IMR-90 (cell line): ENCODE measurements at regions of chr20 and their contacts with region 1.

Region 1: GRCh38 chr20:1212607-1213396 is 9.5 kb downstream of the C20orf202 start:
- DNase-seq: peak; percentile 72
- ATAC-seq: peak; percentile 99
- H3K4me3 ChIP-seq: no peak overlapping the region
- H3K27ac ChIP-seq: no peak overlapping the region
- H3K4me1 ChIP-seq: no peaks in the 10 kb centered on the region
- H3K27me3 ChIP-seq: peaks cover 29% of the 10 kb centered on the region
- CTCF ChIP-seq: peak; percentile 77
- POLR2A ChIP-seq: no peak
- RAD21 ChIP-seq: peak; percentile 71

Region 2: GRCh38 chr20:956330-956951 is 256.4 kb before region 1 on chr20:
- CTCF ChIA-PET with region 1: no interaction called
- POLR2A ChIA-PET with region 1: no interaction called
- dilution Hi-C with region 1: no loop called
- in situ Hi-C with region 1: no loop called
- intact Hi-C with region 1: loop called (anchors 5 kb)
- DNase-seq: peak; percentile 51
- ATAC-seq: peak; percentile 94
- H3K4me3 ChIP-seq: no peak overlapping the region
- H3K27ac ChIP-seq: no peak overlapping the region
- H3K4me1 ChIP-seq: no peaks in the 10 kb centered on the region
- H3K27me3 ChIP-seq: peaks cover 8% of the 10 kb centered on the region
- CTCF ChIP-seq: peak; percentile 97
- POLR2A ChIP-seq: peak; percentile 57
- RAD21 ChIP-seq: peak; percentile 99

Region 3: DNA sequence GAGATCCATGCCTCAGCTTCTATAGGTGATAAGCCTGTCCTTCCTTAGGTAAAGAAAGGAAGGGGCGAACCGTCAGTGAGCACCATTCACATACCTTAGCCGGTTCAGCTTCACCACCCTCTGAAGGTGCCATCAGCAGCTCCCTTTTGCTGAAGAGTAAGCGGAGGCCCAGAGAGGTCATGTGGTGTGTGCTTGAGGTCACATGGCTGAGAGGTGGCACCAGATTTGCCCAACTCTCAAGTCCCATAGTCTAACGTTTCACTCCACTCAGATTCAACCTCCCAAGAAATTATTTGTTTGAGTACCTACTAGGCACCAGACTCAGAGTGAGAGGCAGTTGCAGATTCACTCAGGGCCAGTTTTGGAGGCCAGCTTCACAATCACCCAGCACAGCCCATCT is 192.2 kb before region 1 on chr20:
- CTCF ChIA-PET with region 1: no interaction called
- POLR2A ChIA-PET with region 1: no interaction called
- dilution Hi-C with region 1: no loop called
- in situ Hi-C with region 1: no loop called
- intact Hi-C with region 1: no loop called
- DNase-seq: no peak
- ATAC-seq: no peak
- H3K4me3 ChIP-seq: no peak overlapping the region
- H3K27ac ChIP-seq: no peak overlapping the region
- H3K4me1 ChIP-seq: no peaks in the 10 kb centered on the region
- H3K27me3 ChIP-seq: no peaks in the 10 kb centered on the region
- CTCF ChIP-seq: no peak
- POLR2A ChIP-seq: no peak
- RAD21 ChIP-seq: no peak

Region 4: DNA sequence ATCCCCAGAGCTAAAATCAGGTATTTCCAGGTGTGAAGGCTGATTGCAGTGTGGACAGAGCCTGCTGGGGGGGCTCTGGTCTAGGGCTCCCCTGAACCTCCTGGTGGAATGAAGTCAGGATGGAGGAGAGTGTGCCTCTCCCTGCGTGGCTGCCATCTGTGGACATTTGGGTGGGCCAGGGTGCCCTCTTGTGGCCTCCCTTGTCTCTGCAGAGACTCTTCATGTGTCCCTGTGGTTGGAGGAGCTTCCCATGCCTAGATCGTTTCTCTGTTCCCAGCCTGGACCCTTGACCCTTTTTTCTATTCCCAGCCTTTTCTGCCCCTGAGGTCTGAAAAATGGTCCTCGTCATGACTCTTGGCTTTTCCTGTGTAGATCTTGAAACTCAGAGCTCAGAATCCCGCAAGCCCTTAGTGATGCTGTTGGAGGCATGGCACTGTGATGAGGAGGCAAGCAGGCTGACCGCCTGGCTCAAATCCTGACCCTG is 104.3 kb before region 1 on chr20:
- CTCF ChIA-PET with region 1: no interaction called
- POLR2A ChIA-PET with region 1: no interaction called
- dilution Hi-C with region 1: no loop called
- in situ Hi-C with region 1: no loop called
- intact Hi-C with region 1: loop called (anchors 5 kb)
- DNase-seq: peak; percentile 23
- ATAC-seq: peak; percentile 96
- H3K4me3 ChIP-seq: no peak overlapping the region
- H3K27ac ChIP-seq: no peak overlapping the region
- H3K4me1 ChIP-seq: no peaks in the 10 kb centered on the region
- H3K27me3 ChIP-seq: peaks cover 12% of the 10 kb centered on the region
- CTCF ChIP-seq: peak; percentile 64
- POLR2A ChIP-seq: no peak
- RAD21 ChIP-seq: peak; percentile 55

Region 5: GRCh38 chr20:1301031-1301529 is 88.3 kb after region 1 on chr20:
- CTCF ChIA-PET with region 1: no interaction called
- POLR2A ChIA-PET with region 1: no interaction called
- dilution Hi-C with region 1: no loop called
- in situ Hi-C with region 1: no loop called
- intact Hi-C with region 1: no loop called
- DNase-seq: peak; percentile 75
- ATAC-seq: peak; percentile 78
- H3K4me3 ChIP-seq: no peak overlapping the region
- H3K27ac ChIP-seq: peak overlapping the region; percentile 31; the same call in 1 of the 2 replicates
- H3K4me1 ChIP-seq: peaks cover 8% of the 10 kb centered on the region
- H3K27me3 ChIP-seq: no peaks in the 10 kb centered on the region
- CTCF ChIP-seq: no peak
- POLR2A ChIP-seq: no peak
- RAD21 ChIP-seq: no peak

Region 6: GRCh38 chr20:1325173-1326030 is 112.6 kb after region 1 on chr20:
- CTCF ChIA-PET with region 1: no interaction called
- POLR2A ChIA-PET with region 1: no interaction called
- dilution Hi-C with region 1: no loop called
- in situ Hi-C with region 1: no loop called
- intact Hi-C with region 1: no loop called
- DNase-seq: peak; percentile 97
- ATAC-seq: peak; percentile 80
- H3K4me3 ChIP-seq: peak overlapping the region; percentile 60
- H3K27ac ChIP-seq: peak overlapping the region; percentile 89
- H3K4me1 ChIP-seq: peaks cover 34% of the 10 kb centered on the region
- H3K27me3 ChIP-seq: no peaks in the 10 kb centered on the region
- CTCF ChIP-seq: no peak; the same call in 1 of the 2 replicates
- POLR2A ChIP-seq: peak; percentile 97
- RAD21 ChIP-seq: 0 out of 2 replicates have a peak, but pooled peaks have one; percentile 1

Region 7: DNA sequence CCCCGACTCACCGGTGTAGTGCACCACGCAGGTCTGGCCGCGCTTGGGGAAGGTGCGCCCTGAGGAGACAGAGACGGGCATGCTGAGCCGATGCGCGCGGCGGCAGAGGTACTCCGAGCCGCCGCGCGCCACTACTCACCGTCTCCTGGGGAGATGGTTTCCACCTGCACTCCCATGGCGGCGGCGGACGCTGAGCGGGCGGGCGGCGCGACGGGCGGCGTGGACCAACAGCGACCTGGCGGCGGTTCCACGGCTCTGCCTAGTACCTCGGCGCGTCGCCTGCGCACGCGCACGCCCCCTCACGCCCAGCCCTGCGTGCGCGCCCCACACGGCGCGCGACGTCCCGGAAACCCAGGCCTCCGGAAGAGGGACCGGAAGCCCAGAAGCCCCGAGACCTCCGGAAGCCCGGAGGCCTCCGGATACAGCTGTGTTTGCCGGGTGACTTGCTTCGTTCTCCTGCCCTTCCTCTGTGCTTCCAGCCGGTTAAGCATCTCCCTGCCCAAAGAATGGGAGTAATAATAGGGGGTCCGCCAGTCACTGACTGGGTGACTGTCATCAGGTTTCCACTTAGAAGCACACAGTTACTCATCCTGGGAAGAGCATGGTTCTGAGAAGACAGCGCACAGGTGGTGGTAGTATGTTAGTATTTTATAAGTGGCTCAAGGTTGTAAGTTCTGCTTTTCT is 180.2 kb after region 1 on chr20 and contains the start of gene FKBP1A:
- CTCF ChIA-PET with region 1: no interaction called
- POLR2A ChIA-PET with region 1: no interaction called
- dilution Hi-C with region 1: no loop called
- in situ Hi-C with region 1: no loop called
- intact Hi-C with region 1: loop called (anchors 10 kb)
- DNase-seq: peak; percentile 90
- ATAC-seq: peak; percentile 94
- H3K4me3 ChIP-seq: peak within 1 kb of the TSS; percentile 65
- H3K27ac ChIP-seq: peak within 1 kb of the TSS; percentile 85
- H3K4me1 ChIP-seq: peaks cover 26% of the 10 kb centered on the region
- H3K27me3 ChIP-seq: no peaks in the 10 kb centered on the region
- CTCF ChIP-seq: 0 out of 2 replicates have a peak, but pooled peaks have one; percentile 8
- POLR2A ChIP-seq: peak; percentile 80
- RAD21 ChIP-seq: 0 out of 2 replicates have a peak, but pooled peaks have one; percentile 6
- total RNA-seq, gene FKBP1A: 91.9 and 120 TPM in 2 replicates